PC-3 (cell line): ENCODE measurements at regions of chr18 and their contacts with region 1.

Region 1: DNA sequence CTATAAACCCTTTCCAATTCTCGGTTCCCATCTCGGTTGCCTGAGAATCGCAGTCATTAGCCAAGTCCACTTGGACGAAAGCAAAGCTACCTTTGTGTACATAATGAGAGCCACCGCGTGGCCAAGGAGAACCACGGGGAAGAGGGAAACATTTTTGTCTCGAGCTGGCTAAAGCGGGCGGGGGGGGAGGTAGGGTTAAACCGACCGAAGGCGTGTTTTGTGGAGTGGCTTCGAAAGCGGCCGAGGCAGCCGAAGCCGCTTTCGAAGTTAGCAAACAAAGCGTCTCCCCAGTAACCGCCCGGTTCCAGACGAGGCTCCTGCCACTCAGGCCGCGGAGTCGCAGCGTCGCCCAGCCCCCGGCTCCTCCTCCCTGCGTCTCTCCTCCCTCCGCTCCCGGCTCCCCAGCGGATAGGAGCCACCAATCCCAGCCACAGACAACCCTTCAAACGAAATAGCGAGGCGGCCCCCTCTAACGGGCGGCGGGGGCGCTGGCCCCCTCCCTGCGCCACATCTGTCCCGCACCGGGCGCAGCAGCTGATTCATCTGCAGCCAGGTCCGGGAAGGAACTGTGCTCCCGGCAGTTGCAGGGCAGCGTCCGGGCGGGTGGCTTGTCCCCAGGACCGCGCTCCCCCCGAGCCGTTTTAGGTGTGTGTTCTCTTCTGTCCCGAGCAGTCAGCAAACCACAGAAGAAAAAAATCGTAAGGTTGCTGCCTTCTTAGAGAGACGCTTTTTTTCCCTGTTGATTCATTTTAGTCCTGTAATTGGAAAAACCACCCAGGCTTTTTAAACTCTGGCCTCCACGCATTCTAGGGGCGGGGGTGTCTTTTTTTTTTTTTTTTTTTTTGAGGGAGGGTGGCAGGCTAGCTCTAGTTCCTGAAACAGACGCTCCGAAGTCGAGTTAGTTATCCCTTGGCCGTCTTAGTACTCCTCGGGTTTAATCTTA is 1.8 kb upstream of the TGIF1 start:
- DNase-seq: peak; percentile 97
- ATAC-seq: peak; percentile 69
- H3K4me3 ChIP-seq: peak overlapping the region; percentile 96
- H3K27ac ChIP-seq: peak overlapping the region; percentile 95
- H3K4me1 ChIP-seq: peaks cover 19% of the 10 kb centered on the region
- H3K27me3 ChIP-seq: no peaks in the 10 kb centered on the region
- CTCF ChIP-seq: peak; percentile 45

Region 2: GRCh38 chr18:3012964-3013804 is 435.0 kb before region 1 on chr18 and contains the start of gene LPIN2:
- CTCF ChIA-PET with region 1: no interaction called
- POLR2A ChIA-PET with region 1: no interaction called
- intact Hi-C with region 1: loop called (anchors 5 kb)
- DNase-seq: peak; percentile 99
- ATAC-seq: peak; percentile 70
- H3K4me3 ChIP-seq: peak within 1 kb of the TSS; percentile 84
- H3K27ac ChIP-seq: no peak within 1 kb of the TSS
- H3K4me1 ChIP-seq: peaks cover 39% of the 10 kb centered on the region
- H3K27me3 ChIP-seq: no peaks in the 10 kb centered on the region
- CTCF ChIP-seq: no peak
- total RNA-seq, gene LPIN2: 9.8 and 10.7 TPM in 2 replicates

Region 3: DNA sequence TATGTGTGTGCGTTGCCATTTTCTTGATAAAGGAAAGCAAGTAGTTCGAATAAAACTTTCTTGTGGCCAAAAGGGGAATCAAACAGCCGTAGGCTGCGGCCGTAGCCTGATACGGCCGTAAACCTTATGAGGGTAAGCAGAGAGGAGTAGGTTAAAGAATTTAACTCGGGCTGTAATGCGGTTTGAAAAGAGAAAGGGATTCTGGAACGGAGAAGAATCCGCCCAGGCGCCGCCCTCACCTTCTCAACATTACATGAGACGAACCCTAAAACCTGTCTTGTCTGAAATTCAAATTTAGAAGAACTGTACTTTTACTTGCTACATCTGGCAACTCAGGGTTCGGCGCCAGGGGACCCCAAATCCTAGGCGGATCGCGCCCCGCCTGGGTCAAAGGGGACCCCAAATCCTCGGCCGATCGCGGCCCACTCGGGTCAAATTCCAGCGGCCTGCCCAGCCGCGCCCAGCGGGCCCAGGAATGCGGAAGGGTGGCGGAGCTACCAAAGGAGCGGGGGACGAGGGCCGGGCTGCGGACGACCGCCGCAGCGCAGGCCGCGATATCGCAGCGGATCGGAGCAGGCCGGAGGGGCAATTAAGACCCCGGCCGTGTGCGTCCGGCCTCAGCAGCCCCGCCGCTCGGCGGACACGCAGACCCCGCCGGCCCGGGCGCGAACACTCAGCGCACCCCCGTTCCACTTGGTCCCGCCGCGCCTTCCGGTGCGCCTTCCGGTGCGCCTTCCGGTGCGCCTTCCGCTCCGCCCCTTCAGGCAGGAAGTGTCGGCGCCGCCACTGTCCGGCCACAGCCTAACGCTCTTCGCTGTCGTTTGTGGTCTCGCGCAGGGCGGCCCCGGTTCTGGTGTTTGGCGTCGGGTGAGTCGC is 186.6 kb before region 1 on chr18 and contains the start of gene MYL12B:
- CTCF ChIA-PET with region 1: no interaction called
- POLR2A ChIA-PET with region 1: interaction called, 6 read pairs
- intact Hi-C with region 1: loop called (anchors 2 kb)
- DNase-seq: peak; percentile 83
- ATAC-seq: peak; percentile 66
- H3K4me3 ChIP-seq: peak within 1 kb of the TSS; percentile 86
- H3K27ac ChIP-seq: peak within 1 kb of the TSS; percentile 87
- H3K4me1 ChIP-seq: peaks cover 51% of the 10 kb centered on the region
- H3K27me3 ChIP-seq: no peaks in the 10 kb centered on the region
- CTCF ChIP-seq: no peak
- total RNA-seq, gene MYL12B: 233 and 308 TPM in 2 replicates

Region 4: DNA sequence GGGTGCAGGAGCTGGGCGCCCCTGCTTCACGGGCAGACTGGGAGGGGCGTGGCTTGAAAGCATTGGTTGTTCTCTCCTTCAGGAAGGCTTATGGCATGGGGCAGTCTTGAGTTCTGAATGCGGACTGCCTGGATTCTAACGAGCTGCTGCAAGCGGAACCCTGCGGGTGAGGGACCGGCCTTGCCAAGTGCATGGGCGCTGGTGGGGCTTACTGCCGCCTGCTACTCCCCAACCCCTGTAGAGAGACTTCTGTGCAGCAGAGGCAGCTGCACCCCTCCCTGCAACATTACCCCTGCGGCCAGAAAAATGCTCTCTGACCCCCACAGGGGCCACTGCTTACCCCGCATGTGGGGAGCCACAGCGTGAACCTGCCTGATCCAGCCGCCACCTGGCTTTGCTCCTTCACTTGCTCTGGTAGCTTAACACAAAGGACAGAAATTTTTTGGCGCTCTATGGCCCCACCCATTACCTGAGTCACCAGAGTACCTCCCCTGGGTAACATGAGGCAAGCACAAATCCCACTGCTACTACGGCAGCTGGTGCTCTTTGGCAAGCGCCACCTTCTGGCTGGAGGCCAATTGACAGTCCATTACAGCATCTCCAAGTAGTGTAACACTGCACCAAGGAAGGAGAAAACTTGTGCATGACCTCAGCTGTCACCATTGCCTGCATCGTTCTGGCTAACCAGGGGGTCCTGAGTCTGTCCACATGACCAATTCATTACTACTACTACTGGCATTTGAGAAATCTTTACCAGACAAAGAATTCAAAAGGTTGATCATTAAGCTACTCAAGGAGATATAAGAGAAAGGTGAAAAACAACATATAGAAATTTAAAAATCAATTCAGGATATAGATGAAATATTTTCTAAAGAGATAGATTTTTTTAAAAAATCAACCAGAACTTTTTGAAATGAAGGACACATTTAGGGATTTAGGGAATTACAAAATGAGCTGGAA is 150.9 kb before region 1 on chr18:
- CTCF ChIA-PET with region 1: interaction called, 5 read pairs
- POLR2A ChIA-PET with region 1: interaction called, 5 read pairs
- intact Hi-C with region 1: loop called (anchors 1 kb)
- DNase-seq: peak; percentile 99
- ATAC-seq: peak; percentile 94
- H3K4me3 ChIP-seq: peak overlapping the region; percentile 84
- H3K27ac ChIP-seq: peak overlapping the region; percentile 76
- H3K4me1 ChIP-seq: peaks cover 6% of the 10 kb centered on the region; the same call in 1 of the 2 replicates
- H3K27me3 ChIP-seq: no peaks in the 10 kb centered on the region
- CTCF ChIP-seq: peak; percentile 94

Region 5: DNA sequence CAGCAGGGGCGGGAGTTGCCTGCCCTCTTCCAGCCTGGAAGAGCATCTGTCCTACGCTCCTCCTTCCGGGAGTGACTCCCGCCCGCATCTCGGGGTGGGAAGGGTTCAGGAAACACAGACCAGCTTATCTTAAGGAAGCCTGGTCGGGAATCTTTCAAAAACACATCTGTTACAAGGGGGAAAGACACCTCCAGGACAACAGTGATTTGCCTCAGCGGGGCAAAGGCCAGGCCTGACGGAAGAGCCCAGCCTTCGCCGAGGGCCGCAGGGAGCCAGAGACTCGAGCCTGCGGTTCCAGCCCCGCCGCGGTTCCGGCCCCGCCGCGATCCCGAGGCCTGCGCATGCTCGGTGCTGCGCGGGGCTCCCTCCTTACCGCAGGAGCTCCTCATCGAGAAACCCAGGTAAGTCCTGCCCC is 36.3 kb before region 1 on chr18:
- CTCF ChIA-PET with region 1: no interaction called
- POLR2A ChIA-PET with region 1: interaction called, 17 read pairs
- intact Hi-C with region 1: loop called (anchors 1 kb)
- DNase-seq: no peak
- ATAC-seq: no peak
- H3K4me3 ChIP-seq: no peak overlapping the region
- H3K27ac ChIP-seq: peak overlapping the region; percentile 70
- H3K4me1 ChIP-seq: peaks cover 34% of the 10 kb centered on the region
- H3K27me3 ChIP-seq: no peaks in the 10 kb centered on the region
- CTCF ChIP-seq: no peak

Region 6: DNA sequence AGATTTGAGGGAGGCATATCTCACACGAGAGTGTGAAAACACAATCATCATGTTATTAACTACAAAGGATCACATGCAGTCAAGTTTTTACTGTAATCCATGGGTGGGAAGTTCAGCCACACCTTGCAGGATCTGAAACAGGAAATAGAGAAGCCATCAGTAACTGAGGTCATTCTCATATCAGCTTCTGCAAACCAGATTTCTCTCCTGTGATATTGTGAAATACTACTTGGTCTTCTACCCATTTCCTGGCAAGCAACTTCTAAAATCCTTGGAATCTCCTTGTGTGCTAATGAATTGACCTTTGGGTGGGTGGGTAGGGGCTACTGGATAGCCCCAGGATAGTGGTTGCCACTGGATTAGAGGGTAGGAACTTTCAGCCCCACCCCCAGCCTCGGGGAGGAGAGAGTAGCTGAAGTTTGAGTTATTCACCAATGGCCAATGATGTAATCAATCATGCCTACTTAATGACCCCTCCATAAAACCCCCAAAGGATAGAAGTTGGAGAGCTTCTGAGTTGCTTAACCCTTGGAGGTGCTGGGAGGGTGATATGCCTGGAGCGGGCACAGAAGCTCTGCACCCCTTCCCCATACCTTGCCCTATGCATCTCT is 23.8 kb before region 1 on chr18:
- CTCF ChIA-PET with region 1: no interaction called
- POLR2A ChIA-PET with region 1: no interaction called
- intact Hi-C with region 1: no loop called
- DNase-seq: no peak
- ATAC-seq: no peak
- H3K4me3 ChIP-seq: no peak overlapping the region
- H3K27ac ChIP-seq: no peak overlapping the region
- H3K4me1 ChIP-seq: no peaks in the 10 kb centered on the region
- H3K27me3 ChIP-seq: no peaks in the 10 kb centered on the region
- CTCF ChIP-seq: no peak

Region 7: GRCh38 chr18:3466045-3466444 is 17.9 kb after region 1 on chr18:
- CTCF ChIA-PET with region 1: no interaction called
- POLR2A ChIA-PET with region 1: no interaction called
- intact Hi-C with region 1: no loop called
- DNase-seq: peak; percentile 74
- ATAC-seq: peak; percentile 79
- H3K4me3 ChIP-seq: peak overlapping the region; percentile 4; the same call in 1 of the 2 replicates
- H3K27ac ChIP-seq: peak overlapping the region; percentile 43
- H3K4me1 ChIP-seq: peaks cover 13% of the 10 kb centered on the region
- H3K27me3 ChIP-seq: no peaks in the 10 kb centered on the region
- CTCF ChIP-seq: no peak

Region 8: DNA sequence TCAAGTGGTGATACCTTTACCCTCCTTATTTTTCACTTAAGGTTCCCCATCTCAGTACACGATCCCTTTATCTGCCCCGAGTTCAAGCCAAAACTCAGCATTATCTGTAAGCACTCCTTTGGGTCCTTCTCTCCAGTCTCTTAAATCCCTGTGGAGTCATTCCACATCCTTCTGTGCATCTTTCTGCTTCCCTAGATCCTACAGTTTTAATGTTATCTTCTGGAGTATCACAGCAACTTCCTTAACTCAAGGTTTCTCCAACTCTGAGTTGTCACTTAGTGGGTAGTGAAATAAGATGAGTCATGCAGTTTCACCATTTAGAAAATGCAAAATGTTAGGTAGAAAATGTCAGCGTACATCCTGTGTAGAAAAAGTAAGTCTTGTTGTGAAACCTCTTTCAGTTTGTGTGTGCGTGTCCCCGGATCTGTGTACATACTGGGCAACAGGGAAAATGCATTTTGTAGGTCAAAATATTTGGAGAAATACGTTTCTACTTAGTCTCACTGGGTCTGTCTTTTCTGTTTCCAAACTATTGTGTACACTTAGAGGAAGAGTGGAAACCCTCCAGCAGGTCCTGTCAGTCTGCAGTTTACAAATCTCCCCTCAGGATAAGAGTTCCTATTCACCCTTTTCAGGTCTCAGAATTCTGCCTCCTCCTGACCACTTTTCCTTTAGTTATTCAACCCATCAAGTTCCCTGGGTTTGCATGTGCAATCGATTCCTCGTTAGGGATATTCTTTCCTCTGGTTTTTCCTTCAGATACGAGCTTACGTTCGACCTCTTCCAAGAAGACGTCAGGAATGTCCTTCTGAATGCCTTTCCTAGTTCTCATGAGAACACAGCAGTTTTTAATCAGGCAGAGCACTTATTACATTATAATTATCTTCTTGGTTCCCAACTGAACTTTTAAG is 156.6 kb after region 1 on chr18:
- CTCF ChIA-PET with region 1: interaction called, 3 read pairs
- POLR2A ChIA-PET with region 1: interaction called, 47 read pairs
- intact Hi-C with region 1: no loop called
- DNase-seq: peak; percentile 94
- ATAC-seq: peak; percentile 38
- H3K4me3 ChIP-seq: peak overlapping the region; percentile 70
- H3K27ac ChIP-seq: peak overlapping the region; percentile 99
- H3K4me1 ChIP-seq: peaks cover 42% of the 10 kb centered on the region
- H3K27me3 ChIP-seq: no peaks in the 10 kb centered on the region
- CTCF ChIP-seq: no peak